ENCODE measurements at regions of chr11 and their contacts with region 1.

Region 1: DNA sequence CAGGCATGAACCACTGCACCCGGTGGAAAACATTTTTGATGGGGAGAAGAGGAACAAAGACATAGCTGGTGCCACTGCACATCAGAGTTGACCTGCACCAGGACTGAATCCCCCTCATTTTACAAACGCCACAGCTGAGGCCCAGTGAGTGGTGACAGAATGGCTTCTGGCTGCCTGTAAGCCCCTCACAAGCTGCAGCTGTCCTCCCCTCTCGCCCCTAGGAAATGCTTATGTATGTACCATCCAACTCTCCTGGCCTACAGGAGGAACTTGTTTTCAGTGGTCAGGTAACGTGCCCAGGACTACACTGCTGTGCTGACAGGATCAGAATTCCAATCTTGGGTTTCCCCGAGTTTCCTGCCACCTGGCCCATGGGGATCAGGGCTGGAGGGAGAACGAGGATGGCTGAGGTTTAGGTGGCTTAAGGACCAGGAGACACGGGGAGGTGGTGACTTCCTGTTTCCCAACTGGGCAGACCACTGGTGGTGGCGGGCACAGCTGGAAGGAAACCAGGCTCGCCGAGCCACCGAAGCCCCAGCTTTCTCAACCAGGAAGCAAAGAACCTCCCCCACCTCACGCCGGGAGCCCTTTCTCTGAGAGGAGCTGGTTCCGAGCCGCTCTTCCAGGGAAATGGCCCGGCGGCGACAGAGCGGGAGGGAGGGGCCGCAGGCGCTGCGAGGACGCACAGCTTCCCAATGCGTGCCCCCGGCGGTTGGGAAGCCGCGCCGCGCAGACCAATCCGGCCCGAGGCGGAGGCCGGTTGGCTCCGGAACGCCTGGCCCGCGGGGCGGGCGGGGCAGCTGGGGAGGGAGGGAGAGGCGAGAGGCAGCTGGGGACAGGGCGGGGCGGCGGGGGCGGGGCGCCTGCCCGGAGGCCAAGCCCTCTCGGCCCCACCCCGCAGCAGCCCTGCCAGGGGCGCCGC is 1.0 kb upstream of the LRFN4 start:
- DNase-seq: peak; percentile 87 to 92 (median 90)
- ATAC-seq: peak; percentile 52 to 79 (median 62)
- H3K4me3 ChIP-seq: peak overlapping the region; percentile 30 to 54 (median 47)
- H3K27ac ChIP-seq: peak overlapping the region; percentile 41 to 67 (median 53)
- H3K4me1 ChIP-seq: peaks cover 0 to 9% (median 0%) of the 10 kb centered on the region in 4 donors
- H3K27me3 ChIP-seq: no peaks in the 10 kb centered on the region
- CTCF ChIP-seq: no peak
- POLR2A ChIP-seq: peak; percentile 16

Region 2: GRCh38 chr11:66906061-66906735 is 50.4 kb after region 1 on chr11:
- intact Hi-C with region 1: no loop called
- DNase-seq: peak in 2 of 3 donors; percentile 55 to 68
- ATAC-seq: peak in 3 of 4 donors; percentile 1 to 9 (median 3)
- H3K4me3 ChIP-seq: peak overlapping the region; percentile 29 to 69 (median 59)
- H3K27ac ChIP-seq: peak overlapping the region; percentile 64 to 86 (median 76)
- H3K4me1 ChIP-seq: peaks cover 0 to 57% (median 16%) of the 10 kb centered on the region in 4 donors
- H3K27me3 ChIP-seq: no peaks in the 10 kb centered on the region
- CTCF ChIP-seq: no peak
- POLR2A ChIP-seq: peak; percentile 13

Region 3: GRCh38 chr11:66950113-66950535 is 94.3 kb after region 1 on chr11:
- intact Hi-C with region 1: loop called in 1 of 2 experiments (anchors 10 kb)
- DNase-seq: peak in 2 of 3 donors; percentile 39 to 69
- ATAC-seq: peak; percentile 52 to 86 (median 74)
- H3K4me3 ChIP-seq: no peak overlapping the region
- H3K27ac ChIP-seq: peak overlapping the region in 2 of 3 donors; percentile 18 to 68
- H3K4me1 ChIP-seq: peaks cover 0 to 46% (median 10%) of the 10 kb centered on the region in 4 donors
- H3K27me3 ChIP-seq: no peaks in the 10 kb centered on the region
- CTCF ChIP-seq: no peak
- POLR2A ChIP-seq: no peak

Measured in right lobe of liver (tissue), 6 donors.